Activated CD4-positive, alpha-beta memory T cell treated with anti-CD3 and anti-CD28 coated beads for 36 hours (primary cell): ENCODE measurements at regions of chr6 and their contacts with region 1.

Region 1: DNA sequence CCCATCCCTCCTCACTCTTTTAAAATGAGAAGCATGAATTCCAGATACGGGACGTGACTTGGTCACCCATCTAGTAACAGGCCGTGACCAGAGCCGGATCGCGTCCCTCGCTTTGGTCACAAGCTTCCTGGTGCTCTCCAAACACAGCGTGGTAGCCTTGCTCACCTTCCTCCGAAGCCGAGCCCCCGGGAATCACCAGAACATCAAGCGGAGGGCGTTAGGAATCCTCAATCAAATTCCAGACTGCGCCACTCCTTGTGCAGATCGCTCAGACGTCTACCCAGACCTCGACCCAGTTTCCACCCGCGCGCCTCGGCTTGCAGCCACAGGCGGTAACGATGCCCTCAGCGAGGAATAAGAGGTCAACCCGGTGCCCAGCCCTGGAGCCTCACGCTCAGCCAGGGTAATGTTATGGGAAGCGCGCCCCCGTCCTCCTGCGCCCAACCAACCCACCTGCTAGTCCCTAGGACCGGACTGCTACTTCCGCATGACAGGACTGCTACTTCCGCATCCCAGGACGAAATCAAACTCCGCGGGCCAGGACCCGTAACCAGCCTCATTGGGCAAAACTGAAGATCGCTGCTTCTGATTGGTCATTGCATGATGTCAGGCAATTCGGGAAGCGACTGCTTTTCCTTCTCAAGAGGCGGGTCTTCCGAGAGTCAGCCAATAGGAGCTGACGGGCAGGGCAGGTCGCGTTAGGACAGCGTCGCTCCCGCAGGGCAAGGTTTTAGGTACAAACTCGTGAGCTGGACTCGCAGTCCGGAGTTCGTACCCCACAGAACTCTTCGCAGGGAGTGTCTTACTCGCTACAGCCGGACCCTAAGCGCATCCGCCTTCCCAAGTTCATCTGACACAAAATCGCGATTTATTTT is at the start of gene MTFR2:
- DNase-seq: peak; percentile 96
- H3K4me3 Mint-ChIP-seq: peak within 1 kb of the TSS; percentile 88
- H3K27ac Mint-ChIP-seq: peak within 1 kb of the TSS; percentile 76
- H3K4me1 Mint-ChIP-seq: peaks cover 42% of the 10 kb centered on the region
- H3K27me3 Mint-ChIP-seq: no peaks in the 10 kb centered on the region
- total RNA-seq, gene MTFR2: 24.2 to 25.2 TPM

Region 2: GRCh38 chr6:135497412-135498269 is 752.4 kb before region 1 on chr6 and contains the start of gene AHI1:
- CTCF ChIA-PET with region 1: no interaction called
- POLR2A ChIA-PET with region 1: interaction called, 5 read pairs
- intact Hi-C with region 1: loop called (anchors 1 kb)
- DNase-seq: peak; percentile 90
- H3K4me3 Mint-ChIP-seq: peak within 1 kb of the TSS; percentile 9
- H3K27ac Mint-ChIP-seq: no peak within 1 kb of the TSS
- H3K4me1 Mint-ChIP-seq: peaks cover 10% of the 10 kb centered on the region
- H3K27me3 Mint-ChIP-seq: no peaks in the 10 kb centered on the region
- total RNA-seq, gene AHI1: 18.6 to 22.7 TPM

Region 3: GRCh38 chr6:136317021-136317694 is 67.1 kb after region 1 on chr6:
- CTCF ChIA-PET with region 1: interaction called, 8 read pairs
- POLR2A ChIA-PET with region 1: no interaction called
- intact Hi-C with region 1: loop called (anchors 2 kb)
- DNase-seq: peak; percentile 69
- H3K4me3 Mint-ChIP-seq: no peak overlapping the region
- H3K27ac Mint-ChIP-seq: no peak overlapping the region
- H3K4me1 Mint-ChIP-seq: no peaks in the 10 kb centered on the region
- H3K27me3 Mint-ChIP-seq: no peaks in the 10 kb centered on the region

Region 4: DNA sequence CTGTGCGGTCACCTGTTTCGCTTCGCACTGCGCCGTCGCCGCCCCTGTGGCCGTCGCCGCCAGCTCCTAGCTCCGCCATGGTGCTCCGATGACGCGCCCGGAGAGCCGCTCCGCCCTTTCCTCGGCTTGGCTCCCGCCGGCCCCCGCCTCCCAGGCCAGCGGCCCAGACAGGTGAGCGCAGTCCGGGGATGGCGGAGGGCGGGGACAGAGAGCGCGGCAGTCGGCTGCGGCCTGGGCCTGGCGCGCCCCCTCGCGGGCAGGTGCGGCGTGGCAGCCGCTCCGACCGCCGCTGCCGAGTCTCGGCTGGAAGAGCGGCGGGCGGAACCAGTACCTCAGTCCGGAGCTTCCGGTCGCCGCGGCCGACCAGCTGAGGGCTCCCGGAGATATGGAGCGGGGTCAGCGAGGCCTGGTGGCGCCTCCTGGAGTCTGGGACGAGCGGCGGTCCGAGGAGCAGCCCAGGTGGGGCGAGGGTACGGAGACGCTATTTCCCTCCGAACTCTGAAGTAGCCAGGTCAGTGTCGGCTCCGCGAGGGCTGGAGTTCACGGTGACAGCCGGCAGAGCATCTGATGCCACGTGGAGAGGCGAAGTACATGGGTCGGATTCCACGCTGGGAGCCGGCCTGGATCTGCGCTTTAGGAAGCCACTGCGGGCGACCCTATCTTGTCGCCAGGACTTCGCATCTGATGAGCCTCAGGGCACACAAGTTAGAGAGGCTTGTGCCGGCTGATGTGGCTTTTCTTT is 300.5 kb after region 1 on chr6 and contains the start of gene MAP7:
- CTCF ChIA-PET with region 1: interaction called, 3 read pairs
- POLR2A ChIA-PET with region 1: no interaction called
- intact Hi-C with region 1: loop called (anchors 10 kb)
- DNase-seq: peak; percentile 80
- H3K4me3 Mint-ChIP-seq: peak within 1 kb of the TSS; percentile 58
- H3K27ac Mint-ChIP-seq: no peak within 1 kb of the TSS
- H3K4me1 Mint-ChIP-seq: peaks cover 1% of the 10 kb centered on the region
- H3K27me3 Mint-ChIP-seq: peaks cover 23% of the 10 kb centered on the region
- total RNA-seq, gene MAP7: 1.2 to 1.3 TPM